HepG2 (cell line): ENCODE measurements at regions of chr20 and their contacts with region 1.

Region 1: GRCh38 chr20:347640-348484 is 951 bp downstream of the NRSN2 start:
- DNase-seq: peak; percentile 99
- ATAC-seq: peak; percentile 85
- H3K4me3 ChIP-seq: peak overlapping the region; percentile 63 to 88 (median 87)
- H3K27ac ChIP-seq: peak overlapping the region; percentile 81
- H3K4me1 ChIP-seq: peaks cover 34% of the 10 kb centered on the region
- H3K27me3 ChIP-seq: no peaks in the 10 kb centered on the region
- CTCF ChIP-seq: peak; percentile 27
- EP300 ChIP-seq: peak in 1 of 2 experiments; percentile 86; a peak in 3 of 4 replicates
- POLR2A ChIP-seq: peak; percentile 80 to 85
- RAD21 ChIP-seq: peak; percentile 65

Region 2: GRCh38 chr20:208942-209566 is 138.8 kb before region 1 on chr20:
- CTCF ChIA-PET with region 1: no interaction called
- POLR2A ChIA-PET with region 1: no interaction called
- in situ Hi-C with region 1: no loop called
- intact Hi-C with region 1: no loop called
- DNase-seq: peak; percentile 64
- ATAC-seq: peak; percentile 92
- H3K4me3 ChIP-seq: no peak overlapping the region
- H3K27ac ChIP-seq: no peak overlapping the region
- H3K4me1 ChIP-seq: no peaks in the 10 kb centered on the region
- H3K27me3 ChIP-seq: peaks cover 1 to 27% of the 10 kb centered on the region in 2 experiments; a peak in 4 of 5 replicates
- CTCF ChIP-seq: peak; percentile 85
- EP300 ChIP-seq: no peak
- POLR2A ChIP-seq: no peak
- RAD21 ChIP-seq: peak; percentile 47

Region 3: DNA sequence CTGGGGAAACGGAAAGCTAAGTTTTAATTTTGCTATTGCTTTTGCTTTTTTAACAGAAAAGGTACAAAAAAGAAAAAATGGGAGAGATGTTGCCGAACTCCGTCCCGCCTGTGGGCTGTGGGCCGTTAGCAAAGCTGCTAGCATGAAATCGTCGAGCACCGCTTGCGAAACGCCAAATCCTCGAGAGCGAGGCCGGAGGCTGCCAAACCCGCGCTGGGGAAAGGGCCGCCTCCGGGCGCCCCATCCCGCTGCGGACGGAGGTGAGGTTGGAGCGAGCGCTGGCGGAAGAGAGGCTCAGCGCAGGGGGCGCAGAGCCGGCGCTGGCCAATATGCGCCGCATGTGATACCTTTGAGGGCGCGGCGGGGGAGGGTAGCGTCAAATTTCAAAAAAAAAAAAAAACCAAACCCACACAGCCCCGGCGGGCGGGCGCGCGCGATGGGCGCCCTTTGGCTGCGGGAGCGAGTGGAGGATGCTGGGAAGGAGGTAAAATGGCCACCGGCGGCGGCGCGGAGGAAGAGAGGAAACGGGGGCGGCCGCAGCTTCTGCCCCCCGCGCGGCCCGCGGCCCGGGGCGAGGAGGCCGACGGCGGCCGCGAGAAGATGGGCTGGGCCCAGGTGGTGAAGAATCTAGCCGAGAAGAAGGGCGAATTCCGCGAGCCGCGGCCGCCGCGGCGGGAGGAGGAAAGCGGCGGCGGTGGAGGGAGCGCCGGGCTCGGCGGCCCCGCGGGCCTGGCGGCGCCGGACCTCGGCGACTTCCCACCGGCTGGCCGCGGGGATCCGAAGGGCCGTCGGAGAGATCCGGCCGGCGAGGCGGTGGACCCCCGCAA is 50.6 kb before region 1 on chr20 and contains the start of gene ZCCHC3:
- CTCF ChIA-PET with region 1: no interaction called
- POLR2A ChIA-PET with region 1: interaction called, 18 read pairs
- in situ Hi-C with region 1: no loop called
- intact Hi-C with region 1: no loop called
- DNase-seq: peak; percentile 96
- ATAC-seq: peak; percentile 96
- H3K4me3 ChIP-seq: peak within 1 kb of the TSS; percentile 69 to 93 (median 89)
- H3K27ac ChIP-seq: peak within 1 kb of the TSS; percentile 92
- H3K4me1 ChIP-seq: peaks cover 39% of the 10 kb centered on the region
- H3K27me3 ChIP-seq: peaks cover 0 to 24% of the 10 kb centered on the region in 2 experiments; a peak in 3 of 5 replicates
- CTCF ChIP-seq: peak; percentile 74
- EP300 ChIP-seq: peak; percentile 75 to 92
- POLR2A ChIP-seq: peak; percentile 82 to 86
- RAD21 ChIP-seq: peak; percentile 66
- total RNA-seq, gene ZCCHC3: 56.2 and 63.0 TPM in 2 replicates

Region 4: DNA sequence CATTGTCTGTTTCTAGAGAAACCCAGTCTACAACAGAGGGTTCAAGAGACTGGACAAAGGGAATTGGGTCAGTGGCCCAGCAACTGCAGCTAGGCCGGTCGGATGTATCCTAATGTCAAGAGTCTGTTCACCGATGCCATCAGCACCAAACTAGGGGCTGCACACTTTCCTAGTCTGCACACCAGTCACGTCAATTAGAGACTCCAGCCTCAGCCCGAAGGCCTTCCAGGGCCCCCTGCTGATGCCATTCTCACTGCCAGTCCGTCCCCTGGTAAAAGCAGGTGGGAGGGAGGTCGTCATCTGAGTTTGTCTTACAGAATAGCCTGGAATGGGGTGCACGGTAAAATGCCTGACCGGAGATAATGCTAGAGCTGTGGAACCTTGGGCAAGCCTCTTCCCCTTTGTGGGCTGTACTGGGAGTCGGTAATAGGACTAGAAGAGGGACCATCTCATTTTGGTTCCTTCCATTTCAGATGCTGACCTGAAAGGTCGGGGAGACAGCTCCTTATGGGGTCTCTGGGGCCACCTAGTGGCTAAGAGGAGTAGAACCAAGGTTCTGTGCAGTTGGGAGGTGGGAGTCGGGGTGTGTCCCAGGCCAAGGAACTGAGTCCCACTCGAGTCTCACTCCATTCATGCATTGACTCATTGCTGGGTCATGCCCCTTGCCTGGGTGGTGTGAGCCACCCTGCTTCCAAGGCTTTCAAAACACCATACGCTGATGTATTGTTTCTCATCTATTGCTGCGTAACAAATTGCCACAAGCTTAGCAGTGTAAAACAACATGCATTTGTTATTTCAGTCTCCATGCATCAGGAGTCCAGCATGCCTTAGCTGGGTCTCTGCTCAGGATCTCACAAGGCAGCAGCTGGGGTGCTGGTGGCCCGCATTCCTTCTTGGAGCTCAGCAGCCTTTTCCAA is 17.4 kb before region 1 on chr20:
- CTCF ChIA-PET with region 1: no interaction called
- POLR2A ChIA-PET with region 1: interaction called, 107 read pairs
- in situ Hi-C with region 1: no loop called
- intact Hi-C with region 1: loop called (anchors 2 kb)
- DNase-seq: peak; percentile 71
- ATAC-seq: peak; percentile 27
- H3K4me3 ChIP-seq: no peak overlapping the region
- H3K27ac ChIP-seq: no peak overlapping the region
- H3K4me1 ChIP-seq: peaks cover 34% of the 10 kb centered on the region
- H3K27me3 ChIP-seq: no peaks in the 10 kb centered on the region; a peak in 1 of 5 replicates
- CTCF ChIP-seq: peak; percentile 96
- EP300 ChIP-seq: no peak
- POLR2A ChIP-seq: peak in 1 of 2 experiments; percentile 47; a peak in 2 of 4 replicates
- RAD21 ChIP-seq: peak; percentile 92

Region 5: GRCh38 chr20:381581-382290 is 33.9 kb after region 1 on chr20:
- CTCF ChIA-PET with region 1: no interaction called
- POLR2A ChIA-PET with region 1: interaction called, 1,587 read pairs
- in situ Hi-C with region 1: no loop called
- intact Hi-C with region 1: no loop called
- DNase-seq: peak; percentile 85
- ATAC-seq: peak; percentile 69
- H3K4me3 ChIP-seq: peak overlapping the region; percentile 93 to 98 (median 97)
- H3K27ac ChIP-seq: peak overlapping the region; percentile 93
- H3K4me1 ChIP-seq: peaks cover 74% of the 10 kb centered on the region
- H3K27me3 ChIP-seq: no peaks in the 10 kb centered on the region; a peak in 1 of 5 replicates
- CTCF ChIP-seq: no peak; the same call in 1 of the 2 replicates
- EP300 ChIP-seq: 0 out of 4 replicates have a peak, but pooled peaks of 1 of the 2 experiments have one; percentile 37
- POLR2A ChIP-seq: peak; percentile 90
- RAD21 ChIP-seq: peak; percentile 72

Region 6: DNA sequence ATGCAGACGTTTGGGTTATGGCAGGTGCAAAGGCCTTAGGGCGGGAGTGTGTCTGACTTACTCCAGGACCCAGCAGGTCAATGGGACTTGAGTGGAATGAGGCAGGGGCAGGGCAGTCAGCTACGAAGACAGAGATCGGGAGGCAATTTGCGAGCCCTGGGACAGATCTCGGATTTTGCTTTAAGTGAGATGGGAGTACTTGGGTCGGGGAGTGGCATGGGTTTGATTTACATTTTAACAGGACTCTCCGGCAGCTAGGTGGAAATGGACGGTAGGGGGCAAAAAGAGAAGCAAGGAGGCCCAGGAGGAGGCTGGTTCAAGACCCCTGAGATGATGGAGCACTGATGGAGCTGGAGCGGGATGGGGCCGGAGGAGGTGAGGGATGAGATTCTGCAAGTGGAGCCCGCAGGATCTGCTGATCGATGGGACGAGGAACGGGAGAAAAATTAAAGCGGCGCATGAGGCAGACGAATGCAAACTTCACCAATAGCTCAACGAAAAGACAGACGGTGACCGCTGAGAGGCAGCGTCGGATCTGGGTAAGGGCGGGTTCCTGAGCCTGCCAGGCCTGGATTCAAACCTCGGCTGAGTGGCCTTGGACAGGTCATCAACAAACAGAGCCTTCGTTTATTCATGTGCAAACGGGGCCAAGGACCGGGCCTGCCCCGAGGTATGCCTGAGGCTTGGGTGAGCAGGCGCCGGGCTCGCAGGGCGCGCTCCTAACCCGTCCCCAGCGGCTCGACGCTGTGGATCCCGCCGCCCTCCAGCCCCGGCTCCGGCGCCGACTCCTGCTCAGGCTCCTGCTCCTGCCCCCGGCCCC is 59.5 kb after region 1 on chr20:
- CTCF ChIA-PET with region 1: no interaction called
- POLR2A ChIA-PET with region 1: interaction called, 1,587 read pairs
- in situ Hi-C with region 1: no loop called
- intact Hi-C with region 1: no loop called
- DNase-seq: peak; percentile 95
- ATAC-seq: peak; percentile 90
- H3K4me3 ChIP-seq: peak overlapping the region; percentile 49 to 79 (median 57)
- H3K27ac ChIP-seq: peak overlapping the region; percentile 96
- H3K4me1 ChIP-seq: peaks cover 81% of the 10 kb centered on the region
- H3K27me3 ChIP-seq: no peaks in the 10 kb centered on the region; a peak in 1 of 5 replicates
- CTCF ChIP-seq: peak; percentile 57
- EP300 ChIP-seq: peak; percentile 9 to 25; a peak in 1 of 4 replicates
- POLR2A ChIP-seq: peak; percentile 96 to 98
- RAD21 ChIP-seq: peak; percentile 87

Region 7: DNA sequence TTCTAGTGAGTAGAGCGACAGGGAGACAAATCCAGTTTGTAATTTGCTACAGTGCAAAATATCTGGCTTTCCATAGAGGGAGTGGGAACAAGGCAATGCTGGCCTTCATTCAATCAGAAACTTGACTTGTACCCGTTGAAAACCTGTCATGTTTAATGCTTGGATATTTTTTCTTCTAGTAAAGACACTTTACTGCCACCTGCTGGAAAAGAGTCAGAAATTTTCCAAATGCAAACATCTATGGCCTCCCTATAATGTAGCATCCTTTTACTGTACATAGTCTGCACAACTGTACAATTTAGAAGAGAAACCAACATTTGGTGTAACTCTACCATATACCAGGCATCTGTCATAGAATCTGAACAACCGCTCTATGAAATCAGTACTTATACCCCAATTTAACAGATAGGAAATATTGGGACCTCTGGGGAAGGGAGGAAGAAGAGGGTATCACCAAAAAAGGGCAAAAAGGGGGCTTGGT is 131.1 kb after region 1 on chr20:
- CTCF ChIA-PET with region 1: no interaction called
- POLR2A ChIA-PET with region 1: interaction called, 15 read pairs
- in situ Hi-C with region 1: loop called (anchors 5 kb)
- intact Hi-C with region 1: no loop called
- DNase-seq: peak; percentile 84
- ATAC-seq: peak; percentile 60
- H3K4me3 ChIP-seq: no peak overlapping the region
- H3K27ac ChIP-seq: no peak overlapping the region
- H3K4me1 ChIP-seq: peaks cover 56% of the 10 kb centered on the region
- H3K27me3 ChIP-seq: no peaks in the 10 kb centered on the region
- CTCF ChIP-seq: peak; percentile 81
- EP300 ChIP-seq: 0 out of 4 replicates have a peak, but pooled peaks of 1 of the 2 experiments have one; percentile 25
- POLR2A ChIP-seq: no peak
- RAD21 ChIP-seq: peak; percentile 82